A549 (cell line): ENCODE measurements at regions of chr2 and their contacts with region 1.

Region 1: GRCh38 chr2:105114551-105114950 is 76.7 kb downstream of the MRPS9 start:
- DNase-seq: peak; percentile 59 to 70
- ATAC-seq: peak; percentile 65 to 83; a peak in 4 of 6 replicates
- H3K4me3 ChIP-seq: no peak overlapping the region
- H3K27ac ChIP-seq: no peak overlapping the region
- H3K4me1 ChIP-seq: no peaks in the 10 kb centered on the region
- CTCF ChIP-seq: peak; percentile 82
- EP300 ChIP-seq: no peak
- POLR2A ChIP-seq: no peak
- RAD21 ChIP-seq: peak; percentile 86 to 89

Region 2: GRCh38 chr2:105102963-105103421 is 11.6 kb before region 1 on chr2:
- CTCF ChIA-PET with region 1: interaction called, 46 read pairs
- POLR2A ChIA-PET with region 1: no interaction called
- DNase-seq: peak in 1 of 2 experiments; percentile 14
- ATAC-seq: peak; percentile 46 to 52; a peak in 3 of 6 replicates
- H3K4me3 ChIP-seq: no peak overlapping the region
- H3K27ac ChIP-seq: no peak overlapping the region
- H3K4me1 ChIP-seq: no peaks in the 10 kb centered on the region
- CTCF ChIP-seq: no peak
- EP300 ChIP-seq: no peak
- POLR2A ChIP-seq: no peak
- RAD21 ChIP-seq: no peak

Region 3: GRCh38 chr2:105179469-105180372 is 65.2 kb after region 1 on chr2:
- CTCF ChIA-PET with region 1: interaction called, 31 read pairs
- POLR2A ChIA-PET with region 1: no interaction called
- DNase-seq: peak; percentile 65 to 86
- ATAC-seq: peak; percentile 79 to 93
- H3K4me3 ChIP-seq: no peak overlapping the region
- H3K27ac ChIP-seq: no peak overlapping the region
- H3K4me1 ChIP-seq: 0 out of 3 replicates have a peak, but pooled peaks cover 3% of the 10 kb centered on the region
- CTCF ChIP-seq: peak; percentile 60
- EP300 ChIP-seq: no peak
- POLR2A ChIP-seq: no peak
- RAD21 ChIP-seq: peak; percentile 60 to 61; a peak in 4 of 5 replicates

Region 4: GRCh38 chr2:105224444-105224843 is 109.9 kb after region 1 on chr2:
- CTCF ChIA-PET with region 1: interaction called, 10 read pairs
- POLR2A ChIA-PET with region 1: no interaction called
- DNase-seq: no peak
- ATAC-seq: no peak
- H3K4me3 ChIP-seq: no peak overlapping the region
- H3K27ac ChIP-seq: no peak overlapping the region
- H3K4me1 ChIP-seq: no peaks in the 10 kb centered on the region
- CTCF ChIP-seq: no peak
- EP300 ChIP-seq: no peak
- POLR2A ChIP-seq: no peak
- RAD21 ChIP-seq: no peak

Region 5: GRCh38 chr2:105294844-105295481 is 180.4 kb after region 1 on chr2:
- CTCF ChIA-PET with region 1: interaction called, 29 read pairs
- POLR2A ChIA-PET with region 1: no interaction called
- DNase-seq: peak; percentile 58 to 66
- ATAC-seq: peak; percentile 85 to 97
- H3K4me3 ChIP-seq: no peak overlapping the region
- H3K27ac ChIP-seq: no peak overlapping the region
- H3K4me1 ChIP-seq: no peaks in the 10 kb centered on the region
- CTCF ChIP-seq: peak; percentile 49
- EP300 ChIP-seq: no peak
- POLR2A ChIP-seq: no peak
- RAD21 ChIP-seq: peak; percentile 41 to 53; a peak in 3 of 5 replicates